Activated CD4-positive, alpha-beta memory T cell treated with anti-CD3 and anti-CD28 coated beads for 36 hours (primary cell): ENCODE measurements at regions of chr6 and their contacts with region 1.

Region 1: GRCh38 chr6:45714741-45715507 is 300.7 kb downstream of the CLIC5 start:
- DNase-seq: peak; percentile 62
- H3K4me3 Mint-ChIP-seq: no peak overlapping the region
- H3K27ac Mint-ChIP-seq: peak overlapping the region; percentile 93
- H3K4me1 Mint-ChIP-seq: peaks cover 73% of the 10 kb centered on the region
- H3K27me3 Mint-ChIP-seq: no peaks in the 10 kb centered on the region

Region 2: GRCh38 chr6:44655412-44656342 is 1059.2 kb before region 1 on chr6:
- CTCF ChIA-PET with region 1: interaction called, 20 read pairs
- POLR2A ChIA-PET with region 1: no interaction called
- intact Hi-C with region 1: loop called (anchors 1 kb)
- DNase-seq: peak; percentile 85
- H3K4me3 Mint-ChIP-seq: peak overlapping the region; percentile 24
- H3K27ac Mint-ChIP-seq: peak overlapping the region; percentile 76
- H3K4me1 Mint-ChIP-seq: peaks cover 9% of the 10 kb centered on the region
- H3K27me3 Mint-ChIP-seq: no peaks in the 10 kb centered on the region

Region 3: DNA sequence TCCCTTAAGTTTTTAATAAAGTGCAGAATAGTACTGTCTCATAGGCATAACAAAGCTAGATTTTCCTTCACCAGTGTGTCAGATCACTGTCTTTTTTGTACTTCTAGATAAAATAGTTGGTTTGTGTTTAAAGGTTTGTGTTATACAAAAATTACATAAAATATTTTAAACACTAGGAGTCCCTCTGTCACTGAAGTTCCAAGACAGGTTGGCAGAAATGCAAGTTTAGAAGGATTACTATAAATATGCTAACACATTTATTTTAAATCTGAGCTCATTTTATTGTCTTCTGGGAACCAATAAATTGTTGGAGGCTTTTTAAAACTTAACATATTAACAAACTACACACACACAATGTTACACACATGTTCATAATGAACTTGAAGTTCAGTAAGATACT is 417.6 kb before region 1 on chr6:
- CTCF ChIA-PET with region 1: no interaction called
- POLR2A ChIA-PET with region 1: no interaction called
- intact Hi-C with region 1: loop called (anchors 10 kb)
- DNase-seq: no peak
- H3K4me3 Mint-ChIP-seq: no peak overlapping the region
- H3K27ac Mint-ChIP-seq: no peak overlapping the region
- H3K4me1 Mint-ChIP-seq: peaks cover 26% of the 10 kb centered on the region
- H3K27me3 Mint-ChIP-seq: no peaks in the 10 kb centered on the region

Region 4: GRCh38 chr6:45479834-45480751 is 234.8 kb before region 1 on chr6:
- CTCF ChIA-PET with region 1: interaction called, 5 read pairs
- POLR2A ChIA-PET with region 1: no interaction called
- intact Hi-C with region 1: loop called (anchors 1 kb)
- DNase-seq: no peak
- H3K4me3 Mint-ChIP-seq: no peak overlapping the region
- H3K27ac Mint-ChIP-seq: no peak overlapping the region
- H3K4me1 Mint-ChIP-seq: peaks cover 17% of the 10 kb centered on the region
- H3K27me3 Mint-ChIP-seq: no peaks in the 10 kb centered on the region

Region 5: DNA sequence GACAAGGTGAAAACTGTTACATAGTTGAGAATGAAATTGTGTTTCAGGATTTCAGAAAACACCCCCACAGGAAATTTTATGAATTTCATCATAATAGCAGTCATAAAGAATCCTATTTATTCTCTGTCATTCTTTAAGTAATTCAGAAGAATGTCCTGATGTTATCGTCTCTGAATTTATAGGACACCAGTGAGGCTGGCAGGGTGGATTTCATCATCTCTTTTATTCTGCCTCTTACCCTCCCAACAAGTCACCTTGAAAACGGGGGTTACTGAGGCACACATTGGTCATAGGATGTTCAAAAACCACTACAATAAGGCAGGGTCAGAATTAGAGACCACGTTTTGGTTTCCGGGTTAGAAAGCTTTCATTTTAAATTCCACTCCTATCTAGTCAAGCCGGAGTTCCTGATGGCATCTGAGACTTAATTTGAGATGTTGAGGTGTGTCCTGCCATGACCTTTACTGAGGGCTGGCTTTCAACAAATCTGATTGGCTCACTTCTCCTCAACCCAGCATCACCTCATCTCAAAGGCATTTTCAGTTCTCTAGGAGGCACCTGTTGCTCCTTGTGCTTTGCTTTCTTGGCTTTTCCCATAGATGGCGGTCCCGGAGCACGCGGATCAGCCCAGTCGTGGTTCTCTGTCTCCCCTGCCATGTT is 106.5 kb before region 1 on chr6:
- CTCF ChIA-PET with region 1: interaction called, 5 read pairs
- POLR2A ChIA-PET with region 1: interaction called, 5 read pairs
- intact Hi-C with region 1: loop called (anchors 1 kb)
- DNase-seq: peak; percentile 34
- H3K4me3 Mint-ChIP-seq: no peak overlapping the region
- H3K27ac Mint-ChIP-seq: peak overlapping the region; percentile 86
- H3K4me1 Mint-ChIP-seq: peaks cover 39% of the 10 kb centered on the region
- H3K27me3 Mint-ChIP-seq: peaks cover 1% of the 10 kb centered on the region

Region 6: GRCh38 chr6:45737331-45738056 is 22.6 kb after region 1 on chr6:
- CTCF ChIA-PET with region 1: interaction called, 7 read pairs
- POLR2A ChIA-PET with region 1: interaction called, 14 read pairs
- intact Hi-C with region 1: loop called (anchors 1 kb)
- DNase-seq: peak; percentile 24
- H3K4me3 Mint-ChIP-seq: peak overlapping the region; percentile 10
- H3K27ac Mint-ChIP-seq: peak overlapping the region; percentile 75
- H3K4me1 Mint-ChIP-seq: peaks cover 59% of the 10 kb centered on the region
- H3K27me3 Mint-ChIP-seq: peaks cover 8% of the 10 kb centered on the region

Region 7: GRCh38 chr6:45763281-45763680 is 48.4 kb after region 1 on chr6:
- CTCF ChIA-PET with region 1: no interaction called
- POLR2A ChIA-PET with region 1: no interaction called
- intact Hi-C with region 1: no loop called
- DNase-seq: no peak
- H3K4me3 Mint-ChIP-seq: no peak overlapping the region
- H3K27ac Mint-ChIP-seq: no peak overlapping the region
- H3K4me1 Mint-ChIP-seq: peaks cover 9% of the 10 kb centered on the region
- H3K27me3 Mint-ChIP-seq: peaks cover 11% of the 10 kb centered on the region

Region 8: GRCh38 chr6:46011241-46012085 is 296.5 kb after region 1 on chr6:
- CTCF ChIA-PET with region 1: no interaction called
- POLR2A ChIA-PET with region 1: no interaction called
- intact Hi-C with region 1: loop called (anchors 1 kb)
- DNase-seq: peak; percentile 80
- H3K4me3 Mint-ChIP-seq: peak overlapping the region; percentile 39
- H3K27ac Mint-ChIP-seq: peak overlapping the region; percentile 77
- H3K4me1 Mint-ChIP-seq: peaks cover 58% of the 10 kb centered on the region
- H3K27me3 Mint-ChIP-seq: peaks cover 1% of the 10 kb centered on the region